G401 (cell line): ENCODE measurements at regions of chr19 and their contacts with region 1.

Region 1: GRCh38 chr19:54653181-54653809 is 9.5 kb upstream of the LILRB4 start:
- DNase-seq: no peak

Region 2: GRCh38 chr19:54532528-54532927 is 120.8 kb before region 1 on chr19:
- in situ Hi-C with region 1: loop called (anchors 25 kb)
- DNase-seq: no peak

Region 3: GRCh38 chr19:54594737-54595136 is 58.6 kb before region 1 on chr19:
- in situ Hi-C with region 1: no loop called
- DNase-seq: no peak